ENCODE measurements at regions of chr12 and their contacts with region 1.

Region 1: DNA sequence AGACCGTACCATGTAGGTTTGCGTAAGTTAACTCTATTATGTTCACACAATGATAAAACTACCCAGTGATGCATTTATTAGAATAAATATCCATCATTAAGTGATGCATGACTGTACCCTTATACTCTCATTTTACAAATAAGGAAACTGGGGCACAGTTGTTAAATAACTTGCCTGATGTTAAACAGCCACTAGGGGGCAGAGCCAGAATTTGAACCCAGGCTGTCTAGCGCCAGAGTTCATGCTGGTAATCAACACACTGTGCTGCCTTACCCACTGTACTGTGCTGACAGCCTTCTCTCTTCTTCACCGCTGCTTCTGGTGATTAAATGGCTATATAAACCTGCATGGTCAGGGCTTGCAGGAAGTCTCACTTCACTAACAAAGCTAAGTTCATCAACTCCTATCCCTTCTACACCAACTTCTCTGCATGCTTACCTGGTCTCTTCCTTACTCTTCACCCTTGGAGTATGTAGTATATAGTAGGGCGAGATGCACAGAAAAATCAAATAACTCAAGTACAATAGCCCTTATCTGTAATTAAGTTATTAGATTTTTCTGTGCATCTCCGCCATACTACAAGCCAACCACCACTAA is 43.6 kb upstream of the APPL2 start:
- DNase-seq: no peak
- H3K4me3 ChIP-seq: no peak overlapping the region
- H3K27ac ChIP-seq: no peak overlapping the region
- H3K4me1 ChIP-seq: no peaks in the 10 kb centered on the region
- H3K27me3 ChIP-seq: peaks cover 6% of the 10 kb centered on the region
- CTCF ChIP-seq: peak; percentile 72

Region 2: GRCh38 chr12:105382771-105383622 is 103.4 kb after region 1 on chr12:
- intact Hi-C with region 1: loop called (anchors 5 kb)
- DNase-seq: no peak
- H3K4me3 ChIP-seq: peak overlapping the region; percentile 51
- H3K27ac ChIP-seq: no peak overlapping the region
- H3K4me1 ChIP-seq: peaks cover 7% of the 10 kb centered on the region
- H3K27me3 ChIP-seq: peaks cover 20% of the 10 kb centered on the region
- CTCF ChIP-seq: peak; percentile 81